Sciatic nerve (tissue), 2 donors: ENCODE measurements at regions of chr6 and their contacts with region 1.

Region 1: DNA sequence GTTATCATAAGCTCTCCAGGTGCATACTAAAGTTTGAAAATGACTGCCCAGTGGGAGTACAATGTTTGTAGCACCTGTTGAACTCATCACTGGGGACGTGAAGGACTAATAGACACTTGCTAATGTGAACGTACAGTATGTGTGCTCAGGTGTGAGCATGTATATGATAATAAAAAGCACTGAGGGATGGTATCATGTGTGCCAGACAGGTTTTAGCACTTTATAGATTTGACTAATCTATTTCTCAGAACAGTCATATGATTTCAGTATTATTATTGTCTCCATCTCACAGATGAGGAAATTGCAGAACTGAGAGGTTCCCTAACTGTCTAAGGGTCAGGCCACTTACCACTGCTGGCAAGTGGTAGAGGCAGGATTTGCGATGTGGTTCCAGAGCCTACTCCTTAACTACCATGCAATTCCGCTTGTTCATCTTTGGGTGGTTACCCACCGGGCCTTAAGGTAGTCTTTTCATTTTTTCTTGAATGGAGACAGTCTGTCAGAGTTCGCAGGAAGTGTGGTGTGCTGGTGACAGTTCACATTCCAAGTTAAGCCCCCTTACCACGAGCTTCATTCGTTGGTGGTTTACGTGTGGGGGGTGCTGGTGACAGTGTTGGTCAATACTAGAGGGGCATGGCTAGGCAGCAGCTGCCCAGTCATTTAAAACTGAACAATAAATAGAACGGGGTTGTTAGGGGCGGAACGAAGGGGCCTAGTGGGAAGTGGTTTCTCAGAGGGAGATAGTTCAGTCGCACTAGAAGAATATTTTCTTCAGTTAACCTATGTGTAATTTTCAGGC is 46.8 kb downstream of the RREB1 start:
- DNase-seq: no peak
- ATAC-seq: peak; percentile 22

Region 2: DNA sequence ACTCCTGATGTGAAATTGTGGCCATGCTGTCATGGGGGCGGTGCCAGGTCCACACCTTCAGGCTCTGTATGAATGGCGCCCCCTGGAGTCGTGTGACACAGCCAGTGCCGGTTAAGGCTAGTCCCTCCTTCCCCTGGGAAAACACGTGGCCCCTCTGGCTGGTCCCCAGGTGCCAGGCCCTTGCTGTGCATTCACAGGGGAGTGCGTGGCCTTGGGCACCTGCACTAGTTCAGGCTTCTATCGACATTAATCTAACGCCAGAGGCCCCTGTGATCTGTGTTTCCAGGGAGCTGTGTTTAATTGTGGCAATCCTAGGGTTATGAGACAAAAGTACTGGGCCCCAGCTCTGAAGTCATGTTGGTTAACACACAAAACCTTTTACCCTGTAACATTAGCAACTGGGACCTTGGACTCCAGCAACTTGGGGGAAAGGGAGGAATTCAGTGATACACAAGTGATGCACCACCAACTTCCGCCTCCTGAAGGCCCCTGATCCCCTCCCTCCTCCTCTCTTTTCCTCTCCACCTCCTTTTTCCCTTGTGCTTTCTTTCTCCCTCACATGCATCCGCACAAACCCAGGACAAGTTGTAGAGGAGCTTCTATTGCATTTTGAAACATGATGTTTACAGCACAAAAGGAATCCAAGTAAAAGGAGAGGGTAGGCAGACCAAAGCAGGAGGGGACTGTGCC is 84.5 kb after region 1 on chr6:
- intact Hi-C with region 1: loop called (anchors 10 kb)
- DNase-seq: peak; percentile 89
- ATAC-seq: peak; percentile 55

Region 3: GRCh38 chr6:7341989-7342742 is 187.6 kb after region 1 on chr6:
- intact Hi-C with region 1: no loop called
- DNase-seq: no peak
- ATAC-seq: no peak